AG04450 (cell line): ENCODE measurements at regions of chr1 and their contacts with region 1.

Region 1: DNA sequence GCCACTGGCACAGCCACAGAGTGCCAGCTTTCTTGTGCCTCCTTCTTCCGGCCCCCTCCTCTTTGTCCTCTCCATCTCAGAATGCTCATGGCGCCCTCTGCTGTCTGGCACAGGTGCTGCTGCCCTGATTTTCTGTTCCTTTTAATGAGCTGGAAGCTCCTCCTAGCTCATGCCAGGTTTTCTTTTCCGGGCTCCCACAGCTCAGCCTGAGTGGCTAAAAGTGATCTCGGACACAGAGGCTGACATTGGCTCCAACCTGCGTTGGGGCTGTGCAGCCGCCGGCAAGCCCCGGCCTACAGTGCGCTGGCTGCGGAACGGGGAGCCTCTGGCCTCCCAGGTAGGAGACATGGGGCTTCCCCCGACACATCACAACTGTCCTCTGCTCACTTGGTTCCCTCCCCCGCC is 18.7 kb downstream of the CNTN2 start:
- DNase-seq: peak; percentile 3
- H3K4me3 ChIP-seq: no peak overlapping the region
- H3K27ac ChIP-seq: no peak overlapping the region
- H3K27me3 ChIP-seq: peaks cover 26% of the 10 kb centered on the region
- CTCF ChIP-seq: peak; percentile 90

Region 2: DNA sequence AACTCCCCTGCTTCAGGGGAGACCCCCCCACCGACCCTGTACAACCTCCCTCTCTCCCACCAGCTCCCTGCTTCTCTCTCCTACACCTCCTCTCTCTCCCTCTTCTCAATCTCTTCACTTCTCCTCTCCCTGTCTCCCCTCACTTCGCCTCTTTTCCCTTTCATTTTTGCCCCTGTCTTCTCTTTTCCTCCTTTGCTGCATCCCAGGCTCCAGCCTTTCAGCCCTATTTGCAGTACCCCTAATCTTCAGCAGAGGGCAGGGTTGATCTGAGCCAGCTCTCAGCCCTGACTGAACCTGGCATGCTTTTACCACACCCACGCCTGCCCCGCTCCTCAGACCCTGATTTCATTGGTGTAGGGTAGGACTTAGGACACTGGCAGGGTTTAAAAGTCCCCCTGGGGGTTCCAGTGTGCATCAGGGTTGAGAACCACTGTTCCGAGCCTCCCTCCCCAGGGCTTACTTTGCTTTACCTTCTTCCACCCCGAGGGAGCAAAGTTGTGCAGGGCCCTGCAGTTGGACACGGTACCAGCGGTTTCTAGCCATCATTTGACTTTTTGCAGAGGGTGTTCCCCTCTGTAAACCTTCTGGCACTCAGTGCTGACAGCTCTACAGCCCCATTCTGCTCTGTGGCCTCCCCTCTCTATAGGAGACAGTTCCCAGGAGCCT is 86.0 kb before region 1 on chr1:
- CTCF ChIA-PET with region 1: interaction called, 51 read pairs
- POLR2A ChIA-PET with region 1: no interaction called
- DNase-seq: no peak
- H3K4me3 ChIP-seq: no peak overlapping the region
- H3K27ac ChIP-seq: no peak overlapping the region
- H3K27me3 ChIP-seq: peaks cover 7% of the 10 kb centered on the region
- CTCF ChIP-seq: peak; percentile 90

Region 3: GRCh38 chr1:204989266-204990058 is 72.2 kb before region 1 on chr1:
- CTCF ChIA-PET with region 1: interaction called, 129 read pairs
- POLR2A ChIA-PET with region 1: interaction called, 3 read pairs
- DNase-seq: peak; percentile 36
- H3K4me3 ChIP-seq: no peak overlapping the region
- H3K27ac ChIP-seq: no peak overlapping the region
- H3K27me3 ChIP-seq: peaks cover 36% of the 10 kb centered on the region
- CTCF ChIP-seq: peak; percentile 98

Region 4: DNA sequence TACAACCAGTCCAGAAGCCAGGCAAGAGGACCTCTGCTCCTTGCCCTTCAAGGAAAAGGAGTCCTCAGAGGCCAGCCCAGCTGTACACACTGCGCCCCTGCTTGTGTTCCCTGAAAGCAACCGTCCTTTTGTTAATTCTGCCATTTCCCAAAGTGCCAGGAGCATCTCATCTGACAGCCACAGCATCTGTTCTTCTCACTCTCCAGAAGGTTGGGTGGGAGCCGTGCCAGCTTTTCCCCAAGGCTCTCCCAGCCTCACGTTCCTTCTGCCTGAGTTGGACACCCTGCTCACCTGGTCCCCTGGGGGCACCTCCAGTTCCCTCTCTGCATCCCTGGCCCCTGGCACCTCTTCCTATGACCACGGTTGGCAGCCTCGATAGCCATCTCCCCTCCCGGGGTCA is 29.2 kb before region 1 on chr1:
- CTCF ChIA-PET with region 1: interaction called, 27 read pairs
- POLR2A ChIA-PET with region 1: no interaction called
- DNase-seq: no peak
- H3K4me3 ChIP-seq: no peak overlapping the region
- H3K27ac ChIP-seq: no peak overlapping the region
- H3K27me3 ChIP-seq: peaks cover 23% of the 10 kb centered on the region
- CTCF ChIP-seq: no peak

Region 5: DNA sequence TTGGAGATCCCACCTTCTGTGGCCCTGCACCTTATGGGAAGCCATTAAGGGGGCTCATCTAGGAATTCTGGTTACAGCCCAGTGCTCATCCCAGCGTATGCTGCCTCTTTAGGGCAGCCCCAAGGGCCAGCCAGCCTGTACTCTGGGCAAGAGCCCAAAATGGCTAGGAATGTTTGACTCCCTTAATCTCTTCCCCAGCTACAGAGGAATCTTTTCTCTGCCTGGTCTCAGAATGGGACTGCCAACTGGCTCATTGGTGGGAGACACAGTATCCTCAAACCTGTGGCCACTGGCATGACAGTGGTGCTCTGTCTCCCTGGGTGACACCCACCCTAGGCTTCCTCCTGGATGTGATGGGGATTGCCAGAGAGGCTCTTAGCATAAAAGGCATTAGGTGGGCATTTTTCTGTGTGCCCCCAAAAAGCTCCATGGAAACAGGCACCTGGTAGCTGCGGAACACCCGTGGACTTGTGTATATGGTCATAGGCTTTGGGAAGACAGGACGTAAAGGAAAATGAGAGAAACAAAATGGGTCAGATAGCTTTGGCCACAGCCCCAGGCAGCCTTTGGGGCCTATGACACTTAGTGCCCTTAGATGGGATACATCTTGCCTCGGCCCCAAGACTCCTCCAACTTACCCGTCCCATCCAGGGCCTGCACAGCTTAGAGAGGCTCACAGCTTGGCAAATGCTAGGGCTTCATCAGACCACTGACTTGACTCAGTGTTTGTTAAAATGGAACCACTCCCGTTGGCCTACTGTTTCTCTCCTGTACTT is 15.7 kb after region 1 on chr1:
- CTCF ChIA-PET with region 1: interaction called, 106 read pairs
- POLR2A ChIA-PET with region 1: no interaction called
- DNase-seq: no peak
- H3K4me3 ChIP-seq: no peak overlapping the region
- H3K27ac ChIP-seq: no peak overlapping the region
- H3K27me3 ChIP-seq: peaks cover 3% of the 10 kb centered on the region
- CTCF ChIP-seq: no peak

Region 6: GRCh38 chr1:205108464-205108863 is 46.8 kb after region 1 on chr1:
- CTCF ChIA-PET with region 1: interaction called, 10 read pairs
- POLR2A ChIA-PET with region 1: no interaction called
- DNase-seq: no peak
- H3K4me3 ChIP-seq: no peak overlapping the region
- H3K27ac ChIP-seq: no peak overlapping the region
- H3K27me3 ChIP-seq: no peaks in the 10 kb centered on the region
- CTCF ChIP-seq: no peak